ENCODE measurements at regions of chr16 and their contacts with region 1.

Region 1: DNA sequence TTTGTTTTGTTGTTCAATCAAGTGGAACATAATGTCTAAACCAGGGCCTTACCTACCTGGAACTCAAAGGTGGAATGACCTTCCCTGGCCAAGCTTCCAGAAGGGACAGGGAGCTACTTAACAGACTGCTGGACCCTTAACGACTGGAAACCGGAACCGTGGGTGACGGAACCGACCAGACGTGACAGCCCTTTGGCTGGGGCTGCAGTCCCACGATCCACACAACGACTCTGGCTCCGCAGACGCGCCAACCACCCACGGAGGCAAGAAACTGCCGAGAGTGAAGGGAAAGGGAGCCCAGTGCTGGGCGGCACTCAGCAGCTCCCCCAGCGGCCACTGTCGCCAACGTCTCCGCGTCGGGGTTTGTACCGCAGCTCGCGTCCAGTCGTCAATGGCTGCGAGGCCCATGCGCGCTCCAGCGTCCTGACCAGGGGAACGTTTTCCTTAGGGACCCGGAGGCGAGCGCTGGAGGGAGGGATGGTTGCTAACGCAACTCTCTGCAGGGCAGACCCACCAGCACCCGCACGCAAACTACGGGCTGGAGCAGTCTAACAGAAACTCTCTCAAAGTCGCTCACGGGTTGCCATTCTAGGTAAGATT is 5.5 kb upstream of the KIF22 start:
- DNase-seq: peak; percentile 59 to 77 (median 68)
- ATAC-seq: peak; percentile 95
- H3K4me3 ChIP-seq: peak overlapping the region; percentile 36
- H3K4me3 Mint-ChIP-seq: peak overlapping the region; percentile 56 to 80 (median 72)
- H3K27ac ChIP-seq: peak overlapping the region; percentile 44
- H3K27ac Mint-ChIP-seq: peak overlapping the region; percentile 58 to 95 (median 80)
- H3K4me1 ChIP-seq: peaks cover 12 to 15% of the 10 kb centered on the region in 2 donors
- H3K4me1 Mint-ChIP-seq: peaks cover 12 to 44% (median 28%) of the 10 kb centered on the region in 7 donors
- H3K27me3 ChIP-seq: no peaks in the 10 kb centered on the region
- H3K27me3 Mint-ChIP-seq: peaks cover 0 to under 1% (median 0%) of the 10 kb centered on the region in 5 donors

Region 2: DNA sequence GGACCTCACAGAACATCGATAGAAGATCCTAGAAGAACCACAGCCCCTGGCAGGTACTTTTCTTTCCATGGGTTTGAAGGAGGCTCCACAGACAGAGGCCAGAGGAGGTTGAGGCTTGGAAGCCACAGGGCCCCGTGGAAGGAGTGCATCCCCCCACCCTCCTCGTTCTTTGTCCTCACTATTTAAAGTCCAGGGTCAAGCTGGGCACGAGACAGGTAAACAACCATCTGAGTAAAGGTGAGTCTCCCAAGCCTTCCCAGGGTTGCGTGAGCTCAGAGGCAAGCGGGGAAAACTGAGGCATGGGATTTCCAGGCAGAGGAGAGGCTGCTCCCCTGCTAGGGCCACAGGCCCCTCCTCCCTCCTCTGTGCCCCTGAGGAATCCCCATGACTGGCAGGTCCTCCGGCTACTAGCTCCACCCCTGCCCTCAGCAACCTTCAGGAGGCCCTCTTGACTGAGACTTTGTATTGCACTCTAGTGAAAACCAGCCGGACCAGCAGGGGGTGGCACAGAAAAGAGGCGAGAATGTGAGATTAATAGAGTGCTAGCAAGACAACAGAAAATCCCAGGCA is 1187.2 kb before region 1 on chr16:
- CTCF ChIA-PET with region 1: no interaction called
- POLR2A ChIA-PET with region 1: no interaction called
- intact Hi-C with region 1: no loop called
- DNase-seq: no peak
- ATAC-seq: no peak
- H3K4me3 ChIP-seq: no peak overlapping the region
- H3K4me3 Mint-ChIP-seq: no peak overlapping the region
- H3K27ac ChIP-seq: no peak overlapping the region
- H3K27ac Mint-ChIP-seq: peak overlapping the region in 2 of 9 donors; percentile 28 to 59
- H3K4me1 ChIP-seq: no peaks in the 10 kb centered on the region
- H3K4me1 Mint-ChIP-seq: peaks cover 0 to 12% (median 7%) of the 10 kb centered on the region in 7 donors
- H3K27me3 ChIP-seq: no peaks in the 10 kb centered on the region
- H3K27me3 Mint-ChIP-seq: no peaks in the 10 kb centered on the region

Region 3: GRCh38 chr16:29745853-29746345 is 39.1 kb before region 1 on chr16 and contains the start of gene C16orf54:
- CTCF ChIA-PET with region 1: interaction called, 25 read pairs
- POLR2A ChIA-PET with region 1: interaction called, 79 read pairs
- intact Hi-C with region 1: loop called (anchors 1 kb)
- DNase-seq: peak; percentile 80 to 99 (median 98)
- ATAC-seq: peak; percentile 91
- H3K4me3 ChIP-seq: peak within 1 kb of the TSS; percentile 76
- H3K4me3 Mint-ChIP-seq: peak within 1 kb of the TSS; percentile 96 to 100 (median 99)
- H3K27ac ChIP-seq: peak within 1 kb of the TSS; percentile 99
- H3K27ac Mint-ChIP-seq: peak within 1 kb of the TSS; percentile 95 to 100 (median 99)
- H3K4me1 ChIP-seq: peaks cover 45 to 50% of the 10 kb centered on the region in 2 donors
- H3K4me1 Mint-ChIP-seq: peaks cover 42 to 71% (median 62%) of the 10 kb centered on the region in 7 donors
- H3K27me3 ChIP-seq: no peaks in the 10 kb centered on the region
- H3K27me3 Mint-ChIP-seq: peaks cover 0 to 3% (median 0%) of the 10 kb centered on the region in 5 donors
- total RNA-seq, gene C16orf54: 63.9 to 228 (median 151) TPM

Region 4: DNA sequence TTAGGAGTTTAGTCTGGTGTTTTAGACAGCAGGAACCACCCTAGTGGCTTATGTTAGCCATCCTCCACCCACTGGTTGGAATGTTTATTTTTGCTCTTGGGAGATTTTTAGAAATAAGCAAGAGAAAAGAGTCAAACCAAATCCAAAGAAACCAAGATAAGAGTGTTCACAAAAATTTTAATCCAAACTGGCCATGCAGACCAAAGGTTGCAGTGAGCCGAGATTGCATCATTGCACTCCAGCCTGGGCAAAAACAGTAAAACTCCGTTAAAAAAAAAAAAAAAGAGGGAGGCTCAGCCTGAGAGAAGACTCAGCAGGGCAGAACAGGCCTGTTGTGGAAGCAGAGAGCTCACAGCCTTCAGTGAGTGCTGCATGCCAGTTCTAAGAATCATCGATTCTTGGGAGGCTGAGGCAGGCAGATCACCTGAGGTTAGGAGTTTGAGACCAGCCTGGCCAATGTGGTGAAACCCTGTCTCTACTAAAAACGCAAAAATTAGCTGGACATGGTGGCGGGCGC is 27.0 kb before region 1 on chr16:
- CTCF ChIA-PET with region 1: interaction called, 11 read pairs
- POLR2A ChIA-PET with region 1: interaction called, 8 read pairs
- intact Hi-C with region 1: no loop called
- DNase-seq: no peak
- ATAC-seq: no peak
- H3K4me3 ChIP-seq: no peak overlapping the region
- H3K4me3 Mint-ChIP-seq: peak overlapping the region in 2 of 10 donors; percentile 19 to 36
- H3K27ac ChIP-seq: peak overlapping the region; percentile 61
- H3K27ac Mint-ChIP-seq: peak overlapping the region in 8 of 9 donors; percentile 37 to 96 (median 84)
- H3K4me1 ChIP-seq: peaks cover 8 to 33% of the 10 kb centered on the region in 2 donors
- H3K4me1 Mint-ChIP-seq: peaks cover 14 to 58% (median 40%) of the 10 kb centered on the region in 7 donors
- H3K27me3 ChIP-seq: no peaks in the 10 kb centered on the region
- H3K27me3 Mint-ChIP-seq: peaks cover 0 to 6% (median 0%) of the 10 kb centered on the region in 5 donors